Ascending aorta (tissue), 2 donors: ENCODE measurements at regions of chr6 and their contacts with region 1.

Region 1: GRCh38 chr6:108655806-108656651 is 95.3 kb downstream of the FOXO3 start:
- DNase-seq: no peak
- H3K4me3 ChIP-seq: peak overlapping the region; percentile 8 to 29
- H3K27ac ChIP-seq: peak overlapping the region; percentile 84 to 90
- H3K4me1 ChIP-seq: peaks cover 23 to 77% of the 10 kb centered on the region in 2 donors
- H3K27me3 ChIP-seq: no peaks in the 10 kb centered on the region
- CTCF ChIP-seq: no peak

Region 2: GRCh38 chr6:108592371-108593337 is 63.4 kb before region 1 on chr6:
- intact Hi-C with region 1: loop called (anchors 2 kb)
- DNase-seq: no peak
- H3K4me3 ChIP-seq: peak overlapping the region; percentile 35 to 38
- H3K27ac ChIP-seq: peak overlapping the region; percentile 87 to 91
- H3K4me1 ChIP-seq: peaks cover 48 to 98% of the 10 kb centered on the region in 2 donors
- H3K27me3 ChIP-seq: no peaks in the 10 kb centered on the region
- CTCF ChIP-seq: no peak

Region 3: DNA sequence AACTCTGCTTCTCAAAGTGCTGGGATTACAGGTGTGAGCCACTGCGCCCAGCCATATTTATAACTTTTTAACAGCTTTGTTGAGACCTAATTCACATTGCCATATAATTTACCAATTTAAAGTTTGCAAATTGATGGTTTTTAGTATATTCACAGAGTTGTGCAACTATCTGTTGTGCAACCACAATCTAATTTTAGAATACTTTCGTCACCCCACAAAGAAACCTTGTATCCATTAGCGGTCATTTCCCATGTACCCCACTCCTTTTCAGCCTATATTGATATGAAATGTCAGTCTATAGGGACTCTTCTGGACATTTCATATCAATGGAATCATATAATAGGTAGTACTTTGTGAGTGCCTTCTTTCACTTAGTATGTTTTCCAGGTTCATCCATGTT is 39.5 kb before region 1 on chr6:
- intact Hi-C with region 1: loop called (anchors 5 kb)
- DNase-seq: no peak
- H3K4me3 ChIP-seq: no peak overlapping the region
- H3K27ac ChIP-seq: no peak overlapping the region
- H3K4me1 ChIP-seq: peaks cover 8 to 56% of the 10 kb centered on the region in 2 donors
- H3K27me3 ChIP-seq: no peaks in the 10 kb centered on the region
- CTCF ChIP-seq: no peak

Region 4: DNA sequence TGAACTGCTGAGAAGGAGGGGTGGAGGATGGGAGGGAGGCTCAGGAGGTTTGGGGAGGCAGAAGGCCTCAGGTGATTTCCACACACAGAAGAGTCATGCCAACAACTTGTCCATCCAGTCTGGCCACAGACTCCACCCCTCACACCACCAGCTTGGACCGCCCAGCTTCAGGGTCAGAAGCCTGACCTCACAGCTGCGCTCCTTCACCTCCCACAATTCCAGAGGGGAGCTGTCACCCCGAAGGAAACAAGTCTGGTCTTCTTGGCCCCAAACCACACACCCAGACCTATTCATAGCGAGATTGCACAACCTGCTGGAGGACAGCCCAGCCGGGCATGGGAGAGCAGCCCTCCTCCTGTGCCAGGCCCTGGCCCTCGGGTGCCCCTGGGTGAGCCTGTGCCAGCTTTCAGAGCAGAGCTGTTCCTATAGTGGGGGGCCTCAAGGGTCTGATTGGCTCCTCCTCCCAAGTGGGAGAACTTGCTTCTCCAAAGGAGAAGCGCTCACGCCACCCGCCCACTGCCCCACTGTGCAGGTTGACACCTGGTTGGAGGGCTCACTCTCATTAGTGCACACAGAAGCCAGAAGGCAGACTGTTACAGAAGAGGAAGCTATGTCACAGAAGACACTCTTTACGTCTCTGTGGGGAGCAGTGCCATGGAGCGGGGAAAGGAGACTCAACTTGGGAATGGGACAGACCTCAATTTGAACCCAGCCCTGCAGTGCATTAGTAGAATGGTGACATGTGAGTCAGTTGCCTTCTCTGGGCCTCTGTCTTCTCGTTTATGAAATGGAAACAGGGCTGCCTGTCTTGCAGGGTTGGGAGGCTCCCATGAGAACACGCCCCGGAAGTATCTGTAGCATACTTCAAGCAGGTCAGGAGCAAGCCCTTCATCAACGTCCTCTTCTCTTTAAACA is 33.5 kb after region 1 on chr6:
- intact Hi-C with region 1: loop called (anchors 1 kb)
- DNase-seq: peak; percentile 87 to 97
- H3K4me3 ChIP-seq: no peak overlapping the region
- H3K27ac ChIP-seq: peak overlapping the region; percentile 69 to 70
- H3K4me1 ChIP-seq: peaks cover 26 to 51% of the 10 kb centered on the region in 2 donors
- H3K27me3 ChIP-seq: no peaks in the 10 kb centered on the region
- CTCF ChIP-seq: no peak

Region 5: DNA sequence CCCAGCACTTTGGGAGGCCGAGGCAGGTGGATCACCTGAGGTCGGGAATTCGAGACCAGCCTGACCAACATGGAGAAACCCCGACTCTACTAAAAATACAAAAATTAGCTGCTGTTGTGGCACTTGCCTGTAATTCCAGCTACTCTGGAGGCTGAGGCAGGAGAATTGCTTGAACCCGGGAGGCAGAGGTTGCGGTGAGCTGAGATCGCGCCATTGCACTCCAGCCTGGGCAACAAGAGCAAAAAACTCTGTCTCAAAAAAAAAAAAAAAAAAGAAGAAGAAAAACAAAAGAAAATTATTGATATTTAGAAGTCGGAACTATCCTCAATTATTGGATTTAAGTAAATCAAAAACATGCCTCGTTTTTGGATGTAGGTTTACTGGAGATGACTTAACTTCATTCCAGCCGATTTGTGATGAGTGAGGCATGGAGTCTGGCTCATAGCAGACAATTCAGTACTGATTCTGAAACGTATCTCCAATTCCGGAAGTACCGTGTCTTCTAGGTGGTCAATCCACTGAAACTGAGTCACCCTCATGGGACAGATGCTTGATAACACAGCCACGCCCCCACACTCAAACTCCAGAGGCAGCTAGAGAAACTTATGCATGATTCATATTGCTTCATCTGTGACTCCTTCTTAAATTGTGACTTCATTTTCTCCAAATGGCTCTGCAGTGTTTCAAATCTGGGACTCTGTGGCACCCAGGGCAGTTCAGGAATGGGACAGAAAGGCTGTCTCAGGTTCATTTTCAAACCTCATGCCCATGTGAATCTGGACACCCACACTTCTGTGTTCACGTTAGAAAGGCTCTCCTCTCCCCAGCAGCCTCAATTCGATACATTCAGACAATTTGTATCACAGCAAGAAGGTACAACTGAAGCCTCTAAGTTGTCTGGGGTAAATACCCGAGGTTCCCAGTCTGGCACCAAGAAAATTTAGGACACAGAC is 81.8 kb after region 1 on chr6:
- intact Hi-C with region 1: loop called (anchors 2 kb)
- DNase-seq: peak; percentile 52 to 94
- H3K4me3 ChIP-seq: no peak overlapping the region
- H3K27ac ChIP-seq: peak overlapping the region; percentile 70 to 79
- H3K4me1 ChIP-seq: peaks cover 12 to 54% of the 10 kb centered on the region in 2 donors
- H3K27me3 ChIP-seq: no peaks in the 10 kb centered on the region
- CTCF ChIP-seq: no peak

Region 6: GRCh38 chr6:108782179-108783041 is 126.4 kb after region 1 on chr6:
- intact Hi-C with region 1: loop called (anchors 5 kb)
- DNase-seq: peak; percentile 56 to 90
- H3K4me3 ChIP-seq: peak overlapping the region; percentile 47 to 61
- H3K27ac ChIP-seq: peak overlapping the region in 1 of 2 donors; percentile 10
- H3K4me1 ChIP-seq: peaks cover 0 to 12% of the 10 kb centered on the region in 2 donors
- H3K27me3 ChIP-seq: no peaks in the 10 kb centered on the region
- CTCF ChIP-seq: peak; percentile 66 to 79 (median 66)

Region 7: GRCh38 chr6:109073344-109074132 is 417.5 kb after region 1 on chr6:
- intact Hi-C with region 1: loop called (anchors 10 kb)
- DNase-seq: no peak
- H3K4me3 ChIP-seq: no peak overlapping the region
- H3K27ac ChIP-seq: no peak overlapping the region
- H3K4me1 ChIP-seq: peaks cover 0 to 3% of the 10 kb centered on the region in 2 donors
- H3K27me3 ChIP-seq: no peaks in the 10 kb centered on the region
- CTCF ChIP-seq: peak; percentile 45 to 68 (median 63)